ENCODE measurements at regions of chr11 and their contacts with region 1.

Region 1: GRCh38 chr11:92886243-92886905 is 83.1 kb upstream of the MTNR1B start:
- DNase-seq: no peak
- ATAC-seq: peak; percentile 75 to 84

Region 2: DNA sequence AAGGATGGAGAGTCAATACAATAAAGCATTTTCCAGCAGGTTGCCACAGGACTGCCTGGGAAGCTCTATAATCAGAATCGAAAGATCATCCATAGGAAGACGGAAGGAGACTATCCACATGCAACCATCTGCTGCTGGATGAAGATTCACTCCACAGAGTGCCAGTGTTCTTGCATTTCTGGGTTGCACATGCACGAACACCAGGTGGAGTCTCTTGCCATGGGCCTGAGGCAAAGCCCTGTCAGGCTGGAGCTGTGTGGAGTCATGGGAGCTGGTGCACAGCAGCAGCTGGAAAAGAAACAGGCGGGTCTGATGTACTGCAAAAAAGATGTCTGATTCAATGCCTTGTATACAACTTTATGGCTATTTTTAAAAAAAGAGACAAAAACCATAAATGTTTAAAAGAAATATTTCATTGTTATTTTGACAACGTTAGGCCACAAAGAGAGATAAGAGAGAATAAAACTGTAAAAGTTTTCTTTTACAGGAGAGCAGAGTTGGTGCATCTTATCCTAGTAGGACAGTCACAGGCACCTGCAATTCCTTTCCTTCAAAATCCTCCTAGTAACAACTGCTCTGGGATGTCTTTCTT is 674.7 kb before region 1 on chr11:
- intact Hi-C with region 1: loop called in 1 of 2 experiments (anchors 10 kb)
- DNase-seq: no peak
- ATAC-seq: peak; percentile 44 to 72

Region 3: DNA sequence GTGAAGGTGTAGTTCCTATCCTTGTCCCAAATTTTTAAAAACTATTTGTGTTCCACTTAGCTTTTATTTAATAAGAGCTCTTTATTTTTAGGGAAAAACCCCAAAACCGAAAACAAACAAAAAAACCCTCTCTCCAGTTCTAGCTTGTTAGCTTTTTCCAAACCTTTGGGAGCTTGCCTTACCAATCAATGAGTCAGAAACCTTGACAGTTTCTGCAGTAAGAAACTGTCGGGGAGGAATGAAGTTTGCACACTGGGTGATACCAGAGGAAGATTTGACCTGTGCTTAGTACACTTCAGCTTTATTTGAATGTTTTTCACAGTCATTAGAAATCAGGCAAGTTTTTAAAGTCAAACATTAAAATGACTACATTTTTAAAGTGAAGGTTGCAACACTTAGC is 556.7 kb before region 1 on chr11:
- intact Hi-C with region 1: loop called in 1 of 2 experiments (anchors 10 kb)
- DNase-seq: no peak
- ATAC-seq: peak in 1 of 2 donors; percentile 63

Region 4: DNA sequence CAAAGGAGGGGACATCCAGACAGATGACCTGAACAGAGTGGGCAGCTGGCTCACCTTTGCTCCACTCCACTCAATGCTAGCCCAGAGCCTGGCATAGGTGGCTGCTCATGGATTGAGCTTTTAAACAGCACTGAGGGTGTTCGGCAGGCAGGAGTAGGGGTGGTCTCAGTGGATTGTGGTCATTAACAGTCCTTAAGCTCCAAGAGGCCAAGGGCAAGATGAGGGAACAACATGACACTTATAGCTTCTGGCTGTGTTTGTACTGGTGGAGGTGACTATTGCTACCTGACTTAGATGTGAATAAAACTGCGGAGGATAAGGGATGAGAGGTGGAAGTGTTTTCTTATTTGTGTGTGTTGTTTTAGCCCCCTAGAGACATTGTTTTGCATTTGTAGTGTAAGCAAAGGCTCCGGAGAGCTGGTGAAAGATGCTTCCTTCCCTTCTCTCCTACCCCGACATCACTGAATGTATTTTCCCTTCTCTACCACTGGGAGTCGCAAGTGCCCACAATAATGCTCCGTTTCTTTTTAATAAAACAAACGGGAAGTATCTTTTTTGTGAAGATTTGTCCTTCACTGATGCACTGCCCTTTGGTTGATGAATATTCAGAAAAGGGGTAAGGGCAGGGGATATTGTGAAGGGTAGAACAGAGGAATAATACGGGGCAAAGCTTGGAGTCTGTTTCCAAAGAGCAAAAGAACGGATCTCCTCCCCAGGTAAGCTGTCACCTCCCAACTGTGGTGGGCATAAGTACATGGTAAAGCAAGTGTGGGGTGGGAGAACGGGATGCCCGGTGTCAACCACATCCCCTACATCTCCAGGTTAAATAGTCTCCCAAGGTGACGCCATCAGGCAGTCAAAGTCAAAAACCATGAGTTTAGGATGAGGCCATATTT is 55.5 kb after region 1 on chr11:
- intact Hi-C with region 1: no loop called
- DNase-seq: no peak
- ATAC-seq: peak in 1 of 2 donors; percentile 27